ENCODE measurements at regions of chr12 and their contacts with region 1.

Region 1: DNA sequence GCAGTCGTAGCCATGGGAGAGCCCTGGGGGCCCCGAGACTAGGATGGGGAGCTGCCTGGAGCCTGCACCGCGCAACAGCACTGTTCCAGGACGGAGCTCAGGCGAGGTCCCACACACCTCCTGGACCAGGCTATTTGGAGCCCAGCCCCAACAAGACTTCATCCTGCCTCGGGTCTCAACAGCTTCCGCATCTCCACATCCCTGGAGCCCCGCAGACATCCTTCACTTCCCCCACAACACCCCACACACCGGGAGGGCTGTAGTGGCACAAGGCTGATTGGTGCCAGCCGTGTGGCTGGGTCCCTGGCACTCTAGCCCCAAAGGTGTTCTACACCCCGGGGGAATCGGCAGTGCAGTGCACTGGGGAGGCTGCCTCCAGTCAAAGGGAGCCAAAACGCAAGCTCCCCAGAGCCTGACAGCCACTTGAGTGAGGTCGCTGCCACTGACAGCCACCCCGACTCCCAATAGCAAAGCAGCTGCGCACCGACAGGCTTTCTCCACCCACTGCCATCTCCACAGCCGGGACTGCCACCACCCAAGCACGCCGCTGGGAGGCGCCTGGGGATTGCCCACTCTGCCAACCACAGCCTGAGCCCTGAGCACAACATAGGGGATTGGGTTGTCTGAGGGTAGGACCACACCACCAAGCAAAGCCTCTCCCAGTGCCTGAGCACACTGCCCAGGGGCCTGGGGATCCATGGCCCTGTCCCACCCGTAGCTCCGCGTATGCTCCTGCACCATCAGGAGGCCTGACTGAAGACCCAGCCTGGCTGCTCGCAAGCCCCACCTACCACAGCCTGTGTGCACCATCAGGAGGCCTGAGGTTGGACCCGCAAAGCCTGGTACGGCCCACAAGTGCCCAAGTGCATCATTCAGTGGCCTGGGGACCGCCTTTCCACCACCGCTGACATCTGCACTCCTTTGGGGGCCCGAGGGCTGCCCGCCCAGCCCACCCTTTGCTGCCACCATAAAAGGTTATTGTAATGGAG is 13.2 kb upstream of the KLRF1 start:
- DNase-seq: peak; percentile 46 to 63 (median 54)
- ATAC-seq: peak; percentile 98
- H3K4me3 ChIP-seq: no peak overlapping the region
- H3K27ac ChIP-seq: no peak overlapping the region
- H3K4me1 ChIP-seq: peaks cover 0 to 10% of the 10 kb centered on the region in 2 experiments; a peak in 2 of 5 replicates
- H3K27me3 ChIP-seq: no peaks in the 10 kb centered on the region
- CTCF ChIP-seq: peak; percentile 69 to 81 (median 73)
- EP300 ChIP-seq: no peak
- POLR2A ChIP-seq: no peak
- RAD21 ChIP-seq: peak; percentile 46 to 71

Region 2: DNA sequence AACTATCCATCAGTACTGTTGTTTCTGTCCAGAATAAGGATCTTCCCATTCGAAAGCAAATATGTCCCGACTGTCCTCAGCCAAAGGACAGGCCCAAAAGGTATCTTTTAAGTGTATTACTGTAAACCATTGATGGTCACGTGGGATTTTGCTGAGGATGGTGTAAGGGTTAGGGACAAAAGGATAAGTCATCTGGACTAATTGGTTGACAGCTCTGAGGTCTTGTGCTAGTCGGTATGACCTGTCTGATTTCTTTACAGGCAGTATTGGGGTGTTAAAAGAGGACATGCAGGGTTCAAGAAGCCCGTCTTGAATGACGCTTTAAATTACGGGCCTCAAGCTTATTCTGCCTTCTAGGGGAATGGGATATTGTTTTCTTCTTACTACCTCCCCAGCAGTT is 93.7 kb after region 1 on chr12:
- CTCF ChIA-PET with region 1: no interaction called
- POLR2A ChIA-PET with region 1: no interaction called
- in situ Hi-C with region 1: no loop called
- intact Hi-C with region 1: loop called (anchors 1 kb)
- DNase-seq: no peak
- ATAC-seq: no peak
- H3K4me3 ChIP-seq: no peak overlapping the region
- H3K27ac ChIP-seq: no peak overlapping the region
- H3K4me1 ChIP-seq: no peaks in the 10 kb centered on the region; a peak in 1 of 5 replicates
- H3K27me3 ChIP-seq: no peaks in the 10 kb centered on the region
- CTCF ChIP-seq: no peak
- EP300 ChIP-seq: no peak
- POLR2A ChIP-seq: no peak
- RAD21 ChIP-seq: no peak

Region 3: GRCh38 chr12:9925708-9926393 is 111.7 kb after region 1 on chr12:
- CTCF ChIA-PET with region 1: interaction called, 3 read pairs
- POLR2A ChIA-PET with region 1: no interaction called
- in situ Hi-C with region 1: no loop called
- intact Hi-C with region 1: loop called (anchors 1 kb)
- DNase-seq: peak in 2 of 4 experiments; percentile 7 to 23
- ATAC-seq: 0 out of 3 replicates have a peak, but pooled peaks have one; percentile 45
- H3K4me3 ChIP-seq: no peak overlapping the region
- H3K27ac ChIP-seq: no peak overlapping the region
- H3K4me1 ChIP-seq: no peaks in the 10 kb centered on the region
- H3K27me3 ChIP-seq: no peaks in the 10 kb centered on the region
- CTCF ChIP-seq: peak; percentile 33 to 42 (median 33); a peak in 4 of 6 replicates
- EP300 ChIP-seq: no peak
- POLR2A ChIP-seq: no peak
- RAD21 ChIP-seq: peak; percentile 33 to 52

Region 4: GRCh38 chr12:10140001-10140400 is 325.9 kb after region 1 on chr12:
- CTCF ChIA-PET with region 1: no interaction called
- POLR2A ChIA-PET with region 1: no interaction called
- in situ Hi-C with region 1: loop called (anchors 25 kb)
- intact Hi-C with region 1: no loop called
- DNase-seq: peak in 2 of 4 experiments; percentile 7 to 44
- ATAC-seq: no peak
- H3K4me3 ChIP-seq: no peak overlapping the region
- H3K27ac ChIP-seq: no peak overlapping the region
- H3K4me1 ChIP-seq: no peaks in the 10 kb centered on the region
- H3K27me3 ChIP-seq: no peaks in the 10 kb centered on the region; a peak in 1 of 5 replicates
- CTCF ChIP-seq: peak; percentile 31 to 55 (median 43); a peak in 3 of 6 replicates
- EP300 ChIP-seq: no peak
- POLR2A ChIP-seq: no peak
- RAD21 ChIP-seq: peak; percentile 61 to 67